Activated T-helper 1 cell treated with anti-CD3 and anti-CD28 coated beads, Interleukin-12 subunit alpha, Interleukin-12 subunit beta, Interleukin-2, Interleukin-4 antibody, amounts not matched to agents 30 ng/mL and 10 ng/mL and 1 ng/mL, durations not matched to agents 14 hours and 24 hours and 36 hours (primary cell): ENCODE measurements at regions of chr16 and their contacts with region 1.

Region 1: GRCh38 chr16:27408012-27408601 is 6.1 kb downstream of the IL21R start:
- DNase-seq: no peak
- H3K4me3 Mint-ChIP-seq: peak overlapping the region; percentile 100
- H3K27ac Mint-ChIP-seq: peak overlapping the region; percentile 100
- H3K4me1 Mint-ChIP-seq: peaks cover 82% of the 10 kb centered on the region
- H3K27me3 Mint-ChIP-seq: no peaks in the 10 kb centered on the region

Region 2: DNA sequence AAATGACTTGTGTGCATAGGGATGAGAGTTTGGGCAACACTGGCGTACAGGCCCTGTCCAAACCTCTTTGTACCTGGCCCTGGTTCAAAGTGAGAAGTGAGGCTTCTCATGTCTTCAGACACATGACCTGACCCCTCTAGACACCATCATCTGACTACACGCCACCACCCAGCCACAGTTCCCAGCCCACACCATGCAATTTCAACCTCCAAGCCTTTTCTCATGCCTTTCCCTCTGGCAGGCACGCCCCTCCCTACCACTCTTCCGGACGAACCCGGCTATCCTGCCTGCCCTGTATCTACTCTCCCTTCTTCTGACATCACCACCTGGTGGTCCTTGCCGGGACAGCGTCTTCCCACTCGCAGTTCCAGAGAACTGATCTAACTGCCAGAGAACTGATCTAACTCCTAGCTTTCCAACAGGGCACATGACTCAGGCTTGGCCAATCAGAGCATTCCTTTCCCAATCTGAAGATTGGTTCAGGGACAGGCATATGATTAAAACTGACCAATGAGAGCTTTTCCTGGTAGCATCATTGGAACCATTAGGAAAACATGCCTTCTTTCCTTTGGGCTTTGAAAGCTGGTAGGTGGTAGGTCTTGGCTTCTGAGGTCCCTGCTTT is 33.2 kb before region 1 on chr16:
- intact Hi-C with region 1: loop called (anchors 1 kb)
- DNase-seq: no peak
- H3K4me3 Mint-ChIP-seq: no peak overlapping the region
- H3K27ac Mint-ChIP-seq: no peak overlapping the region
- H3K4me1 Mint-ChIP-seq: peaks cover 29% of the 10 kb centered on the region
- H3K27me3 Mint-ChIP-seq: no peaks in the 10 kb centered on the region

Region 3: GRCh38 chr16:27426423-27427408 is 18.6 kb after region 1 on chr16:
- intact Hi-C with region 1: loop called (anchors 2 kb)
- DNase-seq: peak; percentile 72
- H3K4me3 Mint-ChIP-seq: peak overlapping the region; percentile 24
- H3K27ac Mint-ChIP-seq: peak overlapping the region; percentile 81
- H3K4me1 Mint-ChIP-seq: peaks cover 78% of the 10 kb centered on the region
- H3K27me3 Mint-ChIP-seq: no peaks in the 10 kb centered on the region

Region 4: GRCh38 chr16:27461483-27462171 is 53.5 kb after region 1 on chr16:
- intact Hi-C with region 1: loop called (anchors 1 kb)
- DNase-seq: no peak
- H3K4me3 Mint-ChIP-seq: no peak overlapping the region
- H3K27ac Mint-ChIP-seq: no peak overlapping the region
- H3K4me1 Mint-ChIP-seq: peaks cover 22% of the 10 kb centered on the region
- H3K27me3 Mint-ChIP-seq: no peaks in the 10 kb centered on the region